AG04449 (cell line): ENCODE measurements at regions of chr19 and their contacts with region 1.

Region 1: GRCh38 chr19:43784981-43785808 is 4.4 kb upstream of the KCNN4 start:
- DNase-seq: no peak
- H3K4me3 ChIP-seq: no peak overlapping the region; the same call in 1 of the 2 replicates
- CTCF ChIP-seq: peak; percentile 91

Region 2: DNA sequence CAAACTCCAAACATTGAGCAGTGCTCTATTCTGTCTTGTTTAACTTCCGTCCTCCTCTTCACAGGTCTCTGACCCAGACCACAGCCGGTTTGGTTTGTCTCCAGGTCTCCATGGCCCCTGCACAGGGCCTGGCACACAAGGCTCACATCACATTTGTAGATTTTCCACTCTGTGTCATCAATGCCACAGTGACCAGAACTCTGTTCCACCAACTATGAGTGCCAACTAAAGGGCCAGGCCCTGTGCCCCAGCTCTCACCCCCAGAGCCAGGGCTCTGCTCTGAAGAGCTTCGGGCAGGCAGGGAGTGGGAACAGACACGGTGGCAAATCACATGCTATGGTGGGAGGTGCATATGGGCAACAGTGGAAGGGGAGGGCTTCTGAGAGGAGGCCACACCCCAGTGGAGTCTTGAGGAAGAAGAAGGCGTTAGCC is 46.4 kb before region 1 on chr19:
- CTCF ChIA-PET with region 1: interaction called, 103 read pairs
- POLR2A ChIA-PET with region 1: no interaction called
- DNase-seq: no peak
- H3K4me3 ChIP-seq: no peak overlapping the region
- CTCF ChIP-seq: no peak

Region 3: GRCh38 chr19:43765109-43765876 is 19.9 kb before region 1 on chr19:
- CTCF ChIA-PET with region 1: interaction called, 92 read pairs
- POLR2A ChIA-PET with region 1: interaction called, 4 read pairs
- DNase-seq: peak; percentile 87
- H3K4me3 ChIP-seq: no peak overlapping the region
- CTCF ChIP-seq: no peak